Heart right ventricle (tissue), 16 donors: ENCODE measurements at regions of chr3 and their contacts with region 1.

Region 1: GRCh38 chr3:73624821-73625665 is at the start of gene PDZRN3:
- DNase-seq: peak; percentile 61 to 70
- ATAC-seq: peak; percentile 41 to 66 (median 55)
- H3K4me3 ChIP-seq: peak within 1 kb of the TSS; percentile 29 to 69 (median 65)
- H3K27ac ChIP-seq: peak within 1 kb of the TSS; percentile 82 to 96 (median 90)
- H3K4me1 ChIP-seq: peaks cover 0 to 48% (median 18%) of the 10 kb centered on the region in 9 donors
- H3K27me3 ChIP-seq: peaks cover 0 to 33% (median 0%) of the 10 kb centered on the region in 7 donors
- CTCF ChIP-seq: no peak
- total RNA-seq, gene PDZRN3: 63.4 to 143 (median 82.0) TPM

Region 2: DNA sequence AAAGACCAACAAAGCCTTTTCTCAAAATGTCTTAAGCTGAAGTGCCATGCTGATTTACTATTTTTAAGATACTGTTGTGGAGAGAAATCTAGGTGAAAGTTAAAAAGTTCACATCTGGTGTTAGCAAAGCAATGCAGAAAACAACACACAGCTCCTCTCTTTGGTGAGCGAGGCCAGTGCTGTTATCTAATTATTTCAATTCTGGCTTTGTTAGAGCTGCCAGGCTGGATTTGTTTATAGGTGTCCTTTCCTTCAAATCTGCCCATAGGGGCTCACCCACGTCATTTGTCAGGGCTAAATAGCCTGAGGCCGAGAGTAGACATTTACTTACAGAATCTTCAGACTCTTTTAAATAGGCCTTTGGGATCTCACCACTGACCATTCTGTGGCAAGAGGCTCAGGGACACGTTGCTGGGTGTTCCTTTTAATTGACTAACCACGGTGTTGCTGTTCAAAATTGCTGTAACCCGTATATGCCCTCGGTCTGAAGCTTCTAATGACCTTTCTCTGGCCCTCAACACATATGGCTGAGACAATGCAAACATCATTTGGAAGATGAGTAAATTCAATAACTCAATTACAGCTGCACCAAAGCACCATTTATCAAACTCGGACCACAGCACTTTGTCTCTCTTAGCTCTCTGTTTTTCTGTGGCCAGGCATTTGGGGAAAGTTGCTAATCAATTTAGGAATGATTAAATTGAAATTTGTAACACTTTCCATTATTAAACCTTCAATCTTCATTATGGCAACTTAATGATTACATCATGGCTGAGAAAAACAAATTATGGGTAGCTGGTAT is 152.9 kb before region 1 on chr3:
- intact Hi-C with region 1: no loop called
- DNase-seq: no peak
- ATAC-seq: peak in 3 of 8 donors; percentile 33 to 48 (median 41)
- H3K4me3 ChIP-seq: no peak overlapping the region
- H3K27ac ChIP-seq: peak overlapping the region in 5 of 10 donors; percentile 1 to 34 (median 15)
- H3K4me1 ChIP-seq: peaks cover 0 to 41% (median 18%) of the 10 kb centered on the region in 9 donors
- H3K27me3 ChIP-seq: no peaks in the 10 kb centered on the region
- CTCF ChIP-seq: no peak

Region 3: GRCh38 chr3:73508330-73508954 is 116.6 kb before region 1 on chr3:
- intact Hi-C with region 1: loop called in 9 of 10 experiments (anchors 2 to 10 kb)
- DNase-seq: peak in 1 of 2 donors; percentile 65
- ATAC-seq: peak in 6 of 8 donors; percentile 62 to 74 (median 68)
- H3K4me3 ChIP-seq: no peak overlapping the region
- H3K27ac ChIP-seq: peak overlapping the region in 7 of 10 donors; percentile 6 to 73 (median 44)
- H3K4me1 ChIP-seq: peaks cover 0 to 81% (median 37%) of the 10 kb centered on the region in 9 donors
- H3K27me3 ChIP-seq: no peaks in the 10 kb centered on the region
- CTCF ChIP-seq: peak; percentile 43 to 80 (median 77)

Region 4: DNA sequence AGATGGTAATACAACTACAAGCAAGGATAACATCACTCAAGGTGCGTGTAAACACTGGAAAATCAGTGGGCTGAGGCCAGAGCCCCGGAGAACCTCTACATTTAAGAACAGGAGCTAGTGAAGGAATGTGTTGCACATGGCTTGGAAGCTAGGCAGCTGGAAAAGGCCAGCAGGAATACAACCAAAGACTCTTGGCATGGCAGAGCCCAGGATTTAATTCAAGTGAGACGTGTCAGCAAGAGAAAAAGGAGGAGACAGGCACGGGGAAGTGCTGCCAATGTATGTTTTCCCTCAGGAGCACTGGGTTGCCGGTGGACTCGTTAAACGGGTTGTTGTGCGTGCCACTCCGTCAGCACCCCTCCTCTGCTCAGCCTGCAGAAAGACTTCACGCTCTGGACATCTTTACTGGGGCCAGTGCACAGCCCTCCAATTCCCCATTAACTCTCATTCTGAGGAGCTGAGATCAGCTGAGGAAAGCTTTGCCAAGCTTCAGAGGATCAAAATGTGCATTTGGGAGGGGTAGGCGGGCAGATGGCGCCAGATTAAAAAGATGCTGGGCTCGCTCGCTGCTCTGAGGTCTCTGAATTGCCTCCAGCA is 104.1 kb before region 1 on chr3:
- intact Hi-C with region 1: loop called in 2 of 10 experiments (anchors 5 to 10 kb)
- DNase-seq: peak in 1 of 2 donors; percentile 19
- ATAC-seq: peak; percentile 33 to 74 (median 64)
- H3K4me3 ChIP-seq: peak overlapping the region in 3 of 10 donors; percentile 13 to 16 (median 15)
- H3K27ac ChIP-seq: peak overlapping the region in 8 of 10 donors; percentile 32 to 62 (median 55)
- H3K4me1 ChIP-seq: peaks cover 7 to 55% (median 32%) of the 10 kb centered on the region in 9 donors
- H3K27me3 ChIP-seq: no peaks in the 10 kb centered on the region
- CTCF ChIP-seq: no peak

Region 5: GRCh38 chr3:73707772-73708171 is 82.7 kb after region 1 on chr3:
- intact Hi-C with region 1: no loop called
- DNase-seq: no peak
- ATAC-seq: no peak
- H3K4me3 ChIP-seq: no peak overlapping the region
- H3K27ac ChIP-seq: no peak overlapping the region
- H3K4me1 ChIP-seq: peaks cover 0 to 5% (median 0%) of the 10 kb centered on the region in 9 donors
- H3K27me3 ChIP-seq: no peaks in the 10 kb centered on the region
- CTCF ChIP-seq: no peak

Region 6: GRCh38 chr3:73766599-73767381 is 141.7 kb after region 1 on chr3:
- intact Hi-C with region 1: loop called in 1 of 10 experiments (anchors 10 kb)
- DNase-seq: peak in 1 of 2 donors; percentile 5
- ATAC-seq: peak; percentile 40 to 75 (median 68)
- H3K4me3 ChIP-seq: peak overlapping the region in 5 of 10 donors; percentile 13 to 24 (median 21)
- H3K27ac ChIP-seq: peak overlapping the region in 9 of 10 donors; percentile 26 to 79 (median 55)
- H3K4me1 ChIP-seq: peaks cover 0 to 27% (median 10%) of the 10 kb centered on the region in 9 donors
- H3K27me3 ChIP-seq: no peaks in the 10 kb centered on the region
- CTCF ChIP-seq: no peak

Region 7: DNA sequence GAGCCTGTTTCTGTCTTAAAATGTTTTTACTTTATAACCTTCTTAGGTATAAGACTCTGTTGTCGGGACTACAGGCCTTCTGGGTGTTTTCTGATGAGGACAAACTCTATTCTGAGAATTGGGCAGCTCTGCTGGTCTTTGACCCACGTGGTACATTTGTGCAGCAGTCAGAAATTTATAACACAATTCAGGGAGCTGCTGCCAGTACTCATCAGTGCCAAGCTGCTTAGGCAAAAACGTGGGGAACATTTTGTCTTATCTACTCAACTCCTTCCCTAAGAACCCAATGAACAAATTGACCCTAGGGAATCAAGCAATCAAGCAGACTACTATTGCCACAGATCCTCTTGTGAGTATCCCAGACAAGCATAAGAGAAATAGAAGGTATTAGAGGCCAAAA is 180.4 kb after region 1 on chr3:
- intact Hi-C with region 1: loop called in 1 of 10 experiments (anchors 10 kb)
- DNase-seq: peak; percentile 26 to 55
- ATAC-seq: peak; percentile 88 to 98 (median 93)
- H3K4me3 ChIP-seq: no peak overlapping the region
- H3K27ac ChIP-seq: peak overlapping the region; percentile 19 to 83 (median 62)
- H3K4me1 ChIP-seq: peaks cover 0 to 14% (median 5%) of the 10 kb centered on the region in 9 donors
- H3K27me3 ChIP-seq: no peaks in the 10 kb centered on the region
- CTCF ChIP-seq: no peak

Region 8: GRCh38 chr3:73827725-73828211 is 202.7 kb after region 1 on chr3:
- intact Hi-C with region 1: loop called in 4 of 10 experiments (anchors 5 to 10 kb)
- DNase-seq: peak in 1 of 2 donors; percentile 15
- ATAC-seq: peak; percentile 75 to 92 (median 88)
- H3K4me3 ChIP-seq: no peak overlapping the region
- H3K27ac ChIP-seq: peak overlapping the region; percentile 46 to 84 (median 74)
- H3K4me1 ChIP-seq: peaks cover 9 to 29% (median 18%) of the 10 kb centered on the region in 9 donors
- H3K27me3 ChIP-seq: no peaks in the 10 kb centered on the region
- CTCF ChIP-seq: no peak

Region 9: DNA sequence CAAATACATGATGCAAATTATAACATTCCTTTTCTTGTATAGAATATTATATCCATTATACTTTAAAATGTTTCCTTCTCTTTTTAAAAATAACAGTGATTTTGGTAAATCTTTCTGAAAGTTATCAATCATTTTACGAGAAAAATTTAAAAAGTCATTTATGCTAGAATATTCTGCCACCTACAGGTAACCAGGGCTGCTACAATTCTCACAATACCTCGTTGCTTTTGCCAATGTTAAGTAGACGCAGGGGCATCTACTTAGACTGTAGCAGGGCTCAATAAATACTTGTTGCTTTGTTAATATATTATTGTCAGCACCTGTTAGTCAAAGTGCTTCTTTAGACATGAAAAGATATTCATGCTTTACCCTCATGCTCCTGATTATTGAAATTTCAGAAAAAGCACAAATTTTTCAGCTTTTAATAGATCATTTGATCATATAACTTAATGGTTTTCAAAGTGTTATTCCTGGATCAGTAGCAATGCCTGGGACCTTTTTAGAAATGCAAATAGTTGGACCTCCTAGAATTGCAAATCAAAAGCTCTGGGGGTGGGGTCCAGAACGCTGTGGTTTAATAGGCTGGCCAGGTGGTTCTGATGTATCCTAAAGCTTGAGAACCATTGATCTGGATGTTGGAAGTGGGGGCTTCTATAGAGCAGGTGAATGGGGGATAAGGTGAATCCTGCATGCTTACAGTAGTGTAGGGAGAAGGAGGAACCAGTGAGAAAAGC is 223.3 kb after region 1 on chr3:
- intact Hi-C with region 1: loop called in 7 of 10 experiments (anchors 5 to 10 kb)
- DNase-seq: no peak
- ATAC-seq: peak in 1 of 8 donors; percentile 57
- H3K4me3 ChIP-seq: no peak overlapping the region
- H3K27ac ChIP-seq: no peak overlapping the region
- H3K4me1 ChIP-seq: peaks cover 0 to 7% (median 0%) of the 10 kb centered on the region in 9 donors
- H3K27me3 ChIP-seq: no peaks in the 10 kb centered on the region
- CTCF ChIP-seq: peak; percentile 27 to 81 (median 68)